Activated CD4-positive, alpha-beta memory T cell treated with anti-CD3 and anti-CD28 coated beads for 36 hours (primary cell): ENCODE measurements at regions of chr2 and their contacts with region 1.

Region 1: DNA sequence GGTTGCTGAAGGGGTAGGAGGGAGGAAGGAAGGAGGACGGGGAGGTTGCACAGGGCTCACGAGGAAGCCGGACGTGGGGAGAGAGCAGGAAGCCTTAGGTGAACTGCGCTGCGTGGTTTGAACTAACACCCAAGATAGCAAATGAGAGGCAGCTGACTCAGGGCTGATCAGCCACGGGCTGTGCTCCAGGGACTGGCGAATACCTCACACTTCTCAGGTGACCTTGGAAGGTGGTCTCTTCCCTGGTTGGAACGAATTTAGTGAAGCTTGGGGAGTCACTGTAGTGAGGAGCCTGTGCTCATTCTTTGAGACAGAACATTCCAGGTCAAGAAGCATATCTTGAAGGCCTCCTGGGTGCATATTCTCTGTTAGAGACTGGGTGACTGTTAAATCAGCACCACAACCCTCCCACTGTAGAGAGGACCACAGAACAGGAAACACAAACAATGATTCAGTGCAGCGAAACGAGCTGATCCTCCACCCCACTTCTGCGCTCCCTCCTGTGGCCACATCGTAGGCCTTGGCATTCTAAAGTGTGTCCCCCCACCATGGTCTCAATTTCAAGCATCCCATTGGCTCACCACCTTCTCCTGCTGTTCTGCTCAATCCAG is 33.8 kb downstream of the TOGARAM2 start:
- DNase-seq: peak; percentile 87
- H3K4me3 Mint-ChIP-seq: peak overlapping the region; percentile 79
- H3K27ac Mint-ChIP-seq: peak overlapping the region; percentile 95
- H3K4me1 Mint-ChIP-seq: peaks cover 89% of the 10 kb centered on the region
- H3K27me3 Mint-ChIP-seq: no peaks in the 10 kb centered on the region

Region 2: GRCh38 chr2:28621172-28622100 is 393.5 kb before region 1 on chr2:
- CTCF ChIA-PET with region 1: no interaction called
- POLR2A ChIA-PET with region 1: no interaction called
- intact Hi-C with region 1: loop called (anchors 10 kb)
- DNase-seq: peak; percentile 85
- H3K4me3 Mint-ChIP-seq: peak overlapping the region; percentile 53
- H3K27ac Mint-ChIP-seq: peak overlapping the region; percentile 98
- H3K4me1 Mint-ChIP-seq: peaks cover 96% of the 10 kb centered on the region
- H3K27me3 Mint-ChIP-seq: no peaks in the 10 kb centered on the region

Region 3: GRCh38 chr2:28894470-28895177 is 120.3 kb before region 1 on chr2 and contains the start of gene WDR43:
- CTCF ChIA-PET with region 1: no interaction called
- POLR2A ChIA-PET with region 1: no interaction called
- intact Hi-C with region 1: loop called (anchors 2 kb)
- DNase-seq: peak; percentile 98
- H3K4me3 Mint-ChIP-seq: peak within 1 kb of the TSS; percentile 93
- H3K27ac Mint-ChIP-seq: peak within 1 kb of the TSS; percentile 94
- H3K4me1 Mint-ChIP-seq: peaks cover 34% of the 10 kb centered on the region
- H3K27me3 Mint-ChIP-seq: no peaks in the 10 kb centered on the region
- total RNA-seq, gene WDR43: 72.7 to 84.8 TPM

Region 4: GRCh38 chr2:28993206-28993960 is 21.5 kb before region 1 on chr2:
- CTCF ChIA-PET with region 1: no interaction called
- POLR2A ChIA-PET with region 1: no interaction called
- intact Hi-C with region 1: no loop called
- DNase-seq: no peak
- H3K4me3 Mint-ChIP-seq: no peak overlapping the region
- H3K27ac Mint-ChIP-seq: no peak overlapping the region
- H3K4me1 Mint-ChIP-seq: no peaks in the 10 kb centered on the region
- H3K27me3 Mint-ChIP-seq: no peaks in the 10 kb centered on the region

Region 5: DNA sequence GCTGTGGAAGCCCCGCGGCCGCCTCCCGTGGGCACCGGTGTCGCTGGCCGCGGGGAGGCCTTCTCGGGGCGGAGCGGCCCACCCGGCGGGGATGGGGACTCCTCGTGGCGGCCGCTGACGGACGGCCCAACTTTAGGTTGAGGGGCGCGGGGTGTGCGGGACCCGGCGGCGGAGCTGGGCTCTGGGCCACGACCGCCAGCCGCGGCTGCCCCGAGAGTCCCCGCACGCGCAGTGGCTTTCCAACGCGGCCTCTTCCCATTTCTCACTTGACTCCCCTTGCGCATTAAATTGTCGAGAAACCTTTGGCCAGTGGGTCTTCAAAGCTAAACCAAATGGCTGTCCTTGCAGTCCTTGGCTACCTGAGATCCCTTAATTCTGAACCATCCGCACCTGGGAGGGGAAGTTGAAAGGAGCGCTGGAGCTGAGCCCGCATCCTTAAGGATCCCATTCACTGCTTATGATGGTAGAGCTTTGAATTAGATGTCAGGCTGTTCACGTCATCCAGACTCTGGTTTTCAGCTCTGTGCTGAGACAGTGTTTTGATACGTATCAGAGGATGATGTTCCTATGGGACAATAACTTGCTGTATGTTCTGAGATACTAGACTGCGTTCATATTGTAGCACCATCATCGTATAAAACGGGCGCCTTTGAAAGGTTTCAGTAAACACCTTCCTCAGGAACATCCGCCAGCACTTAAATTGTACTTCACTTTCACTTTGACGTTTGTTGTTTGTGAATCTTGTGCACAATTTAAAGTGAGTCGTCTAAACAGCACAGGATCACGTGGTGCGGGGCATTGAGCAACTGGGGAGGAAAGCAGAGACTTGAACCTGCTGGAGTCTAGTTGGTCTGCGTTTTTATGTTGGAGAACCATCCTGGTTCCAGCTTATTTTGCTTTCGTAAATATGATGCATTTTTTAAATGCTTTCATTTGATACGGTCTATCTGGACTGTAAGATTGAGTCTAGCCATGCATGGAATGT is 101.2 kb after region 1 on chr2:
- CTCF ChIA-PET with region 1: interaction called, 8 read pairs
- POLR2A ChIA-PET with region 1: interaction called, 10 read pairs
- intact Hi-C with region 1: loop called (anchors 1 kb)
- DNase-seq: peak; percentile 85
- H3K4me3 Mint-ChIP-seq: peak overlapping the region; percentile 88
- H3K27ac Mint-ChIP-seq: peak overlapping the region; percentile 93
- H3K4me1 Mint-ChIP-seq: peaks cover 58% of the 10 kb centered on the region
- H3K27me3 Mint-ChIP-seq: no peaks in the 10 kb centered on the region

Region 6: GRCh38 chr2:29196792-29197788 is 182.2 kb after region 1 on chr2:
- CTCF ChIA-PET with region 1: interaction called, 5 read pairs
- POLR2A ChIA-PET with region 1: no interaction called
- intact Hi-C with region 1: loop called (anchors 2 kb)
- DNase-seq: peak; percentile 85
- H3K4me3 Mint-ChIP-seq: no peak overlapping the region
- H3K27ac Mint-ChIP-seq: no peak overlapping the region
- H3K4me1 Mint-ChIP-seq: no peaks in the 10 kb centered on the region
- H3K27me3 Mint-ChIP-seq: no peaks in the 10 kb centered on the region